ENCODE measurements at regions of chr1 and their contacts with region 1.

Region 1: DNA sequence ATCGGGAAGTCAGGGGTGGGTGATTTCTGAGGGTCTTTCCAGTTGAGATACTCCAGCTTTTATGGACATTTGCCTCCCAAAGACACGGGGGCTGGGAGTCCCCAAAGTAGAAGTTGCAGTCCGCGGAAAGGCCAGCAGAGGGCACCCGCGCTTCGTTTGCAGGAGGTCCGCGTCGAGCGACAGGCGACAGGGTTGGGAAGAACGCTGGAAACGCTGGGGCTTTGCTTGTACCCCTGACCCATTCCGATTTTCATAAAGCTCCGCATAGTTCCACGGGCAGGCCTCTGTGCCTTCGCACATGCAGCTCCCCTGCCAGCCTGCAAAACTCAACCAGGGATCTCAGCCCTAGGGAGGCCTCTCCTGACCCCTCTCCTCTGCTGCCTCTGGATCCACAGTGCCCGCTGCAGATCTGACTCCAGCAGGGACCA is 44.2 kb upstream of the LAPTM5 start:
- DNase-seq: peak; percentile 80

Region 2: DNA sequence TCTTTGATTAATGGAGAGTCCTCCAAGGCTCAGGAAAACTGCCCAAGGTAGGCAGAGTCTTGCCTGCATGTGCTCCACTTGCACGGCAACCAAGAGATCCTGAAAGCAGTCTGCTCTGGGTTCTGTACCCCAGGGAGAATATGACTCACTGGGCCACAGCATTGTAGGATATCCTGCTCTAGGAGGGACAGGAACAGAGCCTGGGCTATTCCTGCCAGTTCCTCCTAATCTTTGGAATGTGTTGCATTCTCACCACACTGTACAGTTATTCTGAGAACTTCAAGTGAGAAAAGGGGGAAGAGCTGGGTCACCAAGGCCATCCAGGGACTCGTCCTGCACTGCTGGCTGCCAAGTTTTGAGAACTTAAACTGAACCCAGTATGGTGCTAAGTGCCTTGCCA is 356.9 kb before region 1 on chr1:
- in situ Hi-C with region 1: no loop called
- DNase-seq: no peak

Region 3: GRCh38 chr1:30756545-30757195 is 45.1 kb before region 1 on chr1:
- in situ Hi-C with region 1: no loop called
- DNase-seq: no peak

Region 4: DNA sequence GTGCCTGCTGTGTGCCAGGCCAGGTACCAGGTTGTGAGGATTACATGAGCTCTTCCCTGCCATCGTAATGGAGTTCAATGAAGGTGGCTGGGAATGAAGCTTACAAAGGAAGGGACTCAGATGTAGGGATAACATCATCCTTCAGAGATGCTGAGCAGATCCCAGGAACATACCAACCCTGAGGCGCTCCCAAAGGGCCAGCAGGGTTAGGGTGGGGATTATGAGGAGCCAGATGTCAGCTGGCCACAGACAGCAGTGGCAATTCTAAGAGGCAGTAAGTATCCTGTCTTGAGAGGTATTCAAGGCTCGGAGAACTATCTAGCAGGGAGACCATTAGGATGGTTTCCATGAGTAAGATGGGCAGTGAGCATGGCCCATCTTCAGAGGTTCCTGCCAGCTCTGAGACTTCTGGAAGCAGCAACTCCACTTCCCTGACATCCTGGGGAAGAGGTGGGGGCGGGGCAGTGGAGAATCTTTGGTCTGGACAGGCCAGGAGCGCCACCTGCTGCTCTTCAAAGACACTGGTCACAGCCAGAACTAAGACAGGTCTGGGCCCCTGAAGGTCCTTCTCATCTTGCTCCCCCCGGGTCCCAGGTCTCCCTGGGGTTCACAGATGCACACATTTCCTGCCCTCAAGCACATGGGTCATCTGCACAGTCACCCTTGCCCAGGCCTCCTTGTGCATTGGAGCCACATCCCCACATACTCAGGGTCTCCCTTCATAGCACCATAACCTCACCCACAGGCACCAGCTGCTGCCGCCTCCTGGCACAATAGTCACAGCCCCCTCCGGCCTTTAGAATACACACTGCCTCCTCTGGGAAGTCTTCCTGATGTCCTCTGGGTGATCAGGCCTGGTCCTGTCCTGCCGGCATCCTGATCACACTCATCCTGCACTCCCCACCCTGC is 109.5 kb after region 1 on chr1:
- in situ Hi-C with region 1: loop called (anchors 5 kb)
- DNase-seq: peak; percentile 89

Region 5: DNA sequence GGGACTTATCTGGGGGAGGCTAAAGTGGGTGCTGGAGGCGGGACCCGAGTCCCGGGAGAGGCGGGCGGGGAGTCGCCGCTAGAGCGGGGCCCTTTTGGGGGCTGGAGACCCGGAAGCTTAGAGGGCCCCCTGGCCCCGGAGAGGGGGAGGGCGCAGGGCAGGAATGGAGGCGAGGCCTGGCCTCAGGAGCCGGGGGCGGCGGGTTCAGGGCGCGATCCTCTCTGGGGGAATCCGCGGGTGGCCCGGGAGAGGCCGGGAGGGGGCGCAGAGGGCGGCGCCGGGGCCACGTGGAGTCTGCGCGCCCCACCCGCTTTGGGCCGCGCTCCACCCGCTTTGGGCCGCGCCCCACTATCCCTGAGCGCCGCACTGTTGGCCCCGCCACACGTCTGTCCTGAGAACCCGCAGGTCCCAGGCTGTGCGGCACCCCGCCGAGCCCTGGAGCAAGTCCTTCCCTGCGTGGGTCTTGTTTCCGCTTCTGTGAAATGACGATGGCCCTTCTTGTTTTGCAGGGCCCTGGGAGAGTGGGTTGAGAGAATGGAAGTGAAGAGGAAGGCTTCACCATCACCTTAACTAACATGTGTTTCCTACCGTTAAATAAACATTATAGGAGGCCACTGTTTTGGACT is 353.5 kb after region 1 on chr1:
- in situ Hi-C with region 1: no loop called
- DNase-seq: peak; percentile 52